ENCODE measurements at regions of chr1 and their contacts with region 1.

Region 1: DNA sequence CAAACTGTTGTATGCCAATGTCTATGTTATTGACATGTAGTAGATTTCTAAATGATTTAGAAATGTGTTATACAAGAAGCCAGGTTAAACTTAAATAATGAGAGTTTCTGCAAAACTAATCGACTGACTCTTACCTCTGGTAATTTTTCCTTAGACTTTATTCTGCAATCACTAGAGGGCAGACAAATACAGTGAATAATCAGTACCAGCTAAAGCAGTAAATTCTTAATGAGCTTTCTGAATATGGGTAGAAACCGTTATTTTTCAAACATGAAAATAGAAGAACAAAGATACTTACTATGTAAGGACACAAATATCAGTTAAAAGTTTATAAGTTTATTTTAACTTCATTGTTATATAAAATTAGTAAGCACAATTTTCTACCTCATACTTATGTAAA is 97.9 kb upstream of the RGS1 start:
- DNase-seq: no peak
- ATAC-seq: peak; percentile 65
- H3K4me3 Mint-ChIP-seq: no peak overlapping the region
- H3K27ac Mint-ChIP-seq: no peak overlapping the region
- H3K4me1 Mint-ChIP-seq: no peaks in the 10 kb centered on the region
- H3K27me3 Mint-ChIP-seq: no peaks in the 10 kb centered on the region
- CTCF ChIP-seq: peak; percentile 66

Region 2: GRCh38 chr1:192545896-192546521 is 68.4 kb after region 1 on chr1:
- CTCF ChIA-PET with region 1: interaction called, 10 read pairs
- POLR2A ChIA-PET with region 1: no interaction called
- intact Hi-C with region 1: no loop called
- DNase-seq: no peak
- ATAC-seq: peak; percentile 34
- H3K4me3 Mint-ChIP-seq: no peak overlapping the region
- H3K27ac Mint-ChIP-seq: peak overlapping the region; percentile 16
- H3K4me1 Mint-ChIP-seq: peaks cover 52% of the 10 kb centered on the region
- H3K27me3 Mint-ChIP-seq: no peaks in the 10 kb centered on the region
- CTCF ChIP-seq: peak; percentile 16

Region 3: GRCh38 chr1:192580351-192580962 is 102.8 kb after region 1 on chr1:
- CTCF ChIA-PET with region 1: interaction called, 46 read pairs
- POLR2A ChIA-PET with region 1: no interaction called
- intact Hi-C with region 1: loop called (anchors 5 kb)
- DNase-seq: no peak
- ATAC-seq: peak; percentile 22
- H3K4me3 Mint-ChIP-seq: peak overlapping the region; percentile 36
- H3K27ac Mint-ChIP-seq: peak overlapping the region; percentile 1
- H3K4me1 Mint-ChIP-seq: peaks cover 30% of the 10 kb centered on the region
- H3K27me3 Mint-ChIP-seq: no peaks in the 10 kb centered on the region
- CTCF ChIP-seq: peak; percentile 47

Region 4: GRCh38 chr1:192609110-192610079 is 131.8 kb after region 1 on chr1:
- CTCF ChIA-PET with region 1: interaction called, 96 read pairs
- POLR2A ChIA-PET with region 1: interaction called, 3 read pairs
- intact Hi-C with region 1: loop called (anchors 1 kb)
- DNase-seq: peak; percentile 84
- ATAC-seq: peak; percentile 99
- H3K4me3 Mint-ChIP-seq: peak overlapping the region; percentile 31
- H3K27ac Mint-ChIP-seq: peak overlapping the region; percentile 23
- H3K4me1 Mint-ChIP-seq: peaks cover 15% of the 10 kb centered on the region
- H3K27me3 Mint-ChIP-seq: peaks cover 1% of the 10 kb centered on the region
- CTCF ChIP-seq: no peak

Region 5: GRCh38 chr1:193019442-193020026 is 541.9 kb after region 1 on chr1:
- CTCF ChIA-PET with region 1: interaction called, 16 read pairs
- POLR2A ChIA-PET with region 1: no interaction called
- intact Hi-C with region 1: no loop called
- DNase-seq: no peak
- ATAC-seq: no peak
- H3K4me3 Mint-ChIP-seq: no peak overlapping the region
- H3K27ac Mint-ChIP-seq: no peak overlapping the region
- H3K4me1 Mint-ChIP-seq: no peaks in the 10 kb centered on the region
- H3K27me3 Mint-ChIP-seq: no peaks in the 10 kb centered on the region
- CTCF ChIP-seq: peak; percentile 51